ENCODE measurements at regions of chr2 and their contacts with region 1.

Region 1: DNA sequence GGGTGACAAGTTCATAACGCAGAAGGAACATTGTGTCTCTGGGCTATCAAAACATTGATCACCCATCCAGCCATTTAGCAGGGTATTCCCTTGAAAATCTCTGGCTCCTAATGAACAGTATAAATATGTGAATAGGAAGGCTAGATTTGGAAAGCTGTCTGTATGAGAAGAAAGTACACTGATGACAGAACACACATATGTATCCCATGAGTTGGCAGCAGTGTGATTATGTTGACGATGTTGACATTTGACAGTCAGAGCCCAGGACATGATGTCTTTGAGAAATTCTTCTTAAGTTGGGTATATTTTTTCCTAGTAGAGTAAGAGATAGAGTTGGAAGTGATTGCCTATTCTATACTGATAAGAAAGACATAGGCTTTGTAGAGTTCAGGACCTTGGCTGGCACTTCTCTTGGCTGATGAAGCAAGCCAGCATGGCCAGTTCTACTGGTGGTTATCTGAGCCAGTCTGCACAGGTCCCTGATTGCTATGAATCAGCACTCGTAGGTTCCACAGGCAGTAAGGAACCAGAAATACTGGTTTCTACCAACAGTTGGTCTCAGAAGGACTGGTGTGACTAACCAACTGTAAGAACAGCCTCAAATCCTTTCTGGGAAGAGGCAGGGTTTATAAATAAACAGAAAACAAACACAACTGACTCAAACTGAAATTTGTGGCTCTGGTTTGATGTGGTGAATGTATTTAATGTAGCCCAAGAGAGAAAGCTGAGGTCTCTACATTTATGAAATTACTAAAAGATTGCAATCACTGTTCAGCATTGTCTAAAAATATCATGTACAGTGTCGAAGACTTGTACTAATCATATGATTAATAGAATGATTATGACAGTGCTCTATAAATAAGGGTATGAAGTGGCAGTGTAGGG is 43.9 kb upstream of the RAPH1 start:
- DNase-seq: no peak
- ATAC-seq: peak; percentile 28
- H3K4me3 ChIP-seq: no peak overlapping the region
- H3K27ac ChIP-seq: peak overlapping the region; percentile 74 to 76
- H3K4me1 ChIP-seq: peaks cover 3 to 10% of the 10 kb centered on the region in 2 donors
- H3K27me3 ChIP-seq: no peaks in the 10 kb centered on the region

Region 2: GRCh38 chr2:203535078-203535783 is 43.8 kb before region 1 on chr2 and contains the start of gene RAPH1:
- intact Hi-C with region 1: loop called (anchors 2 to 5 kb)
- DNase-seq: peak; percentile 93 to 96
- ATAC-seq: peak; percentile 90
- H3K4me3 ChIP-seq: peak within 1 kb of the TSS; percentile 91 to 98
- H3K27ac ChIP-seq: peak within 1 kb of the TSS; percentile 30 to 91
- H3K4me1 ChIP-seq: peaks cover 0 to 5% of the 10 kb centered on the region in 2 donors
- H3K27me3 ChIP-seq: no peaks in the 10 kb centered on the region
- total RNA-seq, gene RAPH1: 62.0 to 74.2 TPM

Region 3: GRCh38 chr2:203623096-203623495 is 44.1 kb after region 1 on chr2:
- intact Hi-C with region 1: no loop called
- DNase-seq: no peak
- ATAC-seq: no peak
- H3K4me3 ChIP-seq: no peak overlapping the region
- H3K27ac ChIP-seq: no peak overlapping the region
- H3K4me1 ChIP-seq: peaks cover 0 to 1% of the 10 kb centered on the region in 2 donors
- H3K27me3 ChIP-seq: no peaks in the 10 kb centered on the region

Region 4: DNA sequence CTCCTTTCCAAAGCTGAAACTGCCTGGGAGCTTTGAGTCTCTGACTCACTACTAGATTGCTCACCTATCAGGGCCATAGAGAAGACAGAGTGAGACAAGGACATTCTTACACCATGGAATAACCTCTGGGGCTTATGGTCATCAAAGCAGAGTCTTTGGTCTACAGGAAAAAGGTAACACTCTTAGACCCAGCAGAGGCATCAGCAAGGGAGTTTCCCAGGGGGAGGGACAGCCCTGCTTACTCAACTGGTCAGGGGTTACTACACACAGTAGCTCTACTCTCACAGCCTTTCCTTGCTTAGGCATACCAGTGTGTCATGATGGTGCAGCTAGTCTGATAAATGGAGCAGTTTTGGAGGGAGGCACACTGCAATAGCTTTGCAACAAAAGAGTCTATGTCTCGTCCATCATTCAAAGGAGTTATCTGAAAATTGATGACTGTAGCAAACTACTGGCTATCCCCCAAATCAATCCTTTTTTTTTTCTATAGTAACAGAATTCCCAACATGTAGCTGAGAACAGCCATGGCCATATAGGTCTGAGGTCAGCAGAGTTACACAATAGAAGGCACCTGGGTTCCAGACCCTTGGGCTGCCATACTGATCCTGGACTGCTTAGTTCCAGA is 105.0 kb after region 1 on chr2:
- intact Hi-C with region 1: loop called (anchors 1 to 5 kb)
- DNase-seq: peak in 1 of 2 donors; percentile 58
- ATAC-seq: no peak
- H3K4me3 ChIP-seq: no peak overlapping the region
- H3K27ac ChIP-seq: peak overlapping the region; percentile 100
- H3K4me1 ChIP-seq: peaks cover 11 to 14% of the 10 kb centered on the region in 2 donors
- H3K27me3 ChIP-seq: no peaks in the 10 kb centered on the region

Region 5: DNA sequence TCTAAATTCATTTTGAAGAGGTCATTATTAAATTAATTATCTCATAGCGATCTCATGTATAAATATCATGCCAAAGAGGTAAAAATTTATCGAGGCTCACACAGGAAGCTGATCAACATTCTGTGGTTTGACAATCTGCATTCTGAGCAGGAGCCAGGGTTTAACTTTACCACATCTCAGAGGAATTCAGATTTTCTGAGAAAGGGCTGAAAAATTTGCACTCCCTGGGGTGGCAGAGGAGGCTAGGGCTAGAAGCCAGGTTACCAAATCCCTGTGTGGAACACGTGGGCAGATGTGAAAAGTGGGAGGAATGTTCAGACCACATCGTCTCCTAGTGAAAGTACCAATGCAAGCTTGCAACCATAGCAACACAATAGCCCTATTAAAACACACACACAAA is 225.1 kb after region 1 on chr2:
- intact Hi-C with region 1: loop called in 1 of 2 experiments (anchors 5 kb)
- DNase-seq: peak; percentile 70 to 79
- ATAC-seq: peak; percentile 37
- H3K4me3 ChIP-seq: no peak overlapping the region
- H3K27ac ChIP-seq: no peak overlapping the region
- H3K4me1 ChIP-seq: peaks cover 0 to 3% of the 10 kb centered on the region in 2 donors
- H3K27me3 ChIP-seq: no peaks in the 10 kb centered on the region

Measured in aorta (tissue), 5 donors.